Activated CD4-positive, alpha-beta T cell treated with anti-CD3 and anti-CD28 coated beads, Interleukin-2, amount 10 ng/mL, durations not matched to agents 24 days and 14 days (primary cell): ENCODE measurements at regions of chr9 and their contacts with region 1.

Region 1: DNA sequence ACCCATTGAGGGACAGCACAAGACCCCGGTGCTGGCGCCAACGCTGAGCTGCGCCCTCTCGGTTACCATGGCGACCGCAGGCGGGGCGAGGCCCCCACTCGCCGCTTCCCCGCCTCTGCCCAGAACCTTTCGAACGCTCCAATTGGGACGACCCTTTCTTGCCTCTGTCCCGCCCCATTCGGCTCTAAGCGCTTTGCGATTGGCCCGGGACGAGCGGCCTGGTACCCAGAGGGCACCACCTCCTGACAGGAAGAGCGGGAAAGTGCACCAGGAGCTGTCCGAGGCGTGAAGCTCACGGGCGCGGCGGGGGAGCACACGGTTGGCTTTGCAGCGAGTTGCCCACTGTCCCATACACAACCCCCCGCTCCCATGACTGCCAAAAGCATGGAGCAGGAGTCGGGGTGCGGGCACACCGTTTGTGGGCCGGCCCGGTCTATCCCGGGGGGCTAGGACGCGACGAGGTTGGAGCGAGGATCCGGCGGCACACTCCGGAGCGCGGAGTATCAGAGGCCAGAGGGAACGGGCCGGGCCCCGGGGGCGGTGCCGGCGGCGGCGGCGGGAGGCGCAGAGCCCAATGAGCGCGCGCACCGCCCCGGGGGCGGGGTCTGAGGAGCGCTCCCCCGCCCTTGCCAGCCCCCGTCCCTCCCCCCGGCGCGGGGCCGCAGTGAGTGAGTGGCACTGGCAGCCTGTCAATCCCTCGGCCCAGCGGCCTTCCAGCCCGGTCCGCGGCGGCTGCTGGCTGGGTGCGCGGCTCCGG is 978 bp upstream of the PBX3 start:
- DNase-seq: peak; percentile 97
- H3K4me3 Mint-ChIP-seq: peak overlapping the region; percentile 95
- H3K27ac Mint-ChIP-seq: peak overlapping the region; percentile 95
- H3K4me1 Mint-ChIP-seq: peaks cover 27% of the 10 kb centered on the region
- H3K27me3 Mint-ChIP-seq: peaks cover 39% of the 10 kb centered on the region

Region 2: DNA sequence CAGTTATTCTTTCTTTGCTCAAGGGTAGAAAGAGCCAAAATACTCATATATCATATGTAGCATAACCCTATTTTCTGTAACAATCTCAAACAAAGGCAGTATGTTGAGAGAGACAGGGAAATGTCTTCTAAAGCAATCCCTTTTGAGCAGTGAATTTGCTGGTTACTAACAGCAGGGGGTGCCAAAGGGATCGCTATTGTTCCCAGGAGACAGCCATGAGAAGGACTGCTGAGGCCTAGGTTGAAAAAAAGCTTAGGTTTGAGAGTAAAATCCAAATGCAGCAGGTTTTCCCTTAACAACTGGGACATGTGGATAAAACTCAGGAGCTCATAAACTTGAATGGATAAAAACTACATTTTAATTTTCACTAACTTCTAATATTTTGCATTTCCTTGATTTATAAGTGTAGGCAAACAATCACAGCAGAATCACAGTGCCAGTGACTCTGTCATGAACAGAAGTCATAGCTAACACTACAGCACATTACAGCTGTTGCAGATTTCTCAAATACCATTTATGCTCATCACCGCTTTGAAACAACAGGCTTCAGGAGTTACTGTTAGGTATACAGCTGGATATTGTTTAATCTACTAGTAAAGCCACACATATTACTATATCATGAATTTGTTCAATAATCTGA is 187.6 kb before region 1 on chr9:
- intact Hi-C with region 1: loop called (anchors 5 kb)
- DNase-seq: peak; percentile 86
- H3K4me3 Mint-ChIP-seq: no peak overlapping the region
- H3K27ac Mint-ChIP-seq: no peak overlapping the region
- H3K4me1 Mint-ChIP-seq: peaks cover 19% of the 10 kb centered on the region
- H3K27me3 Mint-ChIP-seq: no peaks in the 10 kb centered on the region

Region 3: DNA sequence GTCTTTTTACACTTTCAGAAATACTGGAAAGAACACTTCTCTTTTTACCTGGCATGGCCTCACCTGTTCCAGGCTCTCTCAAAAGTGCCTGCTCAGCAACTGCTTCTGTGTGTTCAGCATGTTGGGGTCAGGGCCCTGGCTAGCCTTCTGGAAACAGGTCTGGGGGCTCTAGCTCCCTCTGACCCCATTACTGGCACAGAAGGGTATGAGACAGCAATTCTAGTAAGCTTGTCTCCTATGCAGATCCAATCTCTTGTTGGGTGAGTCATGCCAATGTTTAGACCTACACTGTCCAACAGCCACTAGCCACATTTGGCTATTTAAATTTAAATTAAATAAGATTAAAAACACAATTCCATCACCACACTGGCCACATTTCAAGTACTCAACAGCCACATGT is 120.0 kb before region 1 on chr9:
- intact Hi-C with region 1: no loop called
- DNase-seq: peak; percentile 49
- H3K4me3 Mint-ChIP-seq: no peak overlapping the region
- H3K27ac Mint-ChIP-seq: no peak overlapping the region
- H3K4me1 Mint-ChIP-seq: peaks cover 14% of the 10 kb centered on the region
- H3K27me3 Mint-ChIP-seq: no peaks in the 10 kb centered on the region

Region 4: GRCh38 chr9:125650271-125650737 is 95.9 kb before region 1 on chr9:
- intact Hi-C with region 1: loop called (anchors 5 kb)
- DNase-seq: peak; percentile 61
- H3K4me3 Mint-ChIP-seq: peak overlapping the region; percentile 48
- H3K27ac Mint-ChIP-seq: peak overlapping the region; percentile 86
- H3K4me1 Mint-ChIP-seq: peaks cover 49% of the 10 kb centered on the region
- H3K27me3 Mint-ChIP-seq: no peaks in the 10 kb centered on the region

Region 5: DNA sequence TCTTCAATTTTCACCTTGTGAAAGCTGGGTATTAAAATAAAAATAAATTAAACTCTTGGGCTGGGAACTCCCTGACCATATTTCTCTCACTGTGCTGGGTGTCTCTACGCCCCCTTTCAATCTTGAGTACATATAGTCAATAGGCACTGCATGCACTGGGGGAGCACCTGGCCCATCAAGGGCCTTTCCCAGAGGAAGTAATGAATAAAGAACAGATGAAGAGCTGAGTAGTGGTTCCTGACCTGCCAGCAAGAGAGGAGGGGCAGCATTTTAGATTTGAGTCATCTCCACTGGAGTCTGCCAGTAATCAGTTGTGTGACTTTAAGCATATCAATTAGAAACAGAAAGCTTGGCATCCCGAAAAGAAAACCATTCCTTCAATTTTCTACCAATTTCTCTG is 45.4 kb before region 1 on chr9:
- intact Hi-C with region 1: loop called (anchors 1 kb)
- DNase-seq: peak; percentile 61
- H3K4me3 Mint-ChIP-seq: peak overlapping the region; percentile 29
- H3K27ac Mint-ChIP-seq: peak overlapping the region; percentile 61
- H3K4me1 Mint-ChIP-seq: peaks cover 37% of the 10 kb centered on the region
- H3K27me3 Mint-ChIP-seq: no peaks in the 10 kb centered on the region

Region 6: DNA sequence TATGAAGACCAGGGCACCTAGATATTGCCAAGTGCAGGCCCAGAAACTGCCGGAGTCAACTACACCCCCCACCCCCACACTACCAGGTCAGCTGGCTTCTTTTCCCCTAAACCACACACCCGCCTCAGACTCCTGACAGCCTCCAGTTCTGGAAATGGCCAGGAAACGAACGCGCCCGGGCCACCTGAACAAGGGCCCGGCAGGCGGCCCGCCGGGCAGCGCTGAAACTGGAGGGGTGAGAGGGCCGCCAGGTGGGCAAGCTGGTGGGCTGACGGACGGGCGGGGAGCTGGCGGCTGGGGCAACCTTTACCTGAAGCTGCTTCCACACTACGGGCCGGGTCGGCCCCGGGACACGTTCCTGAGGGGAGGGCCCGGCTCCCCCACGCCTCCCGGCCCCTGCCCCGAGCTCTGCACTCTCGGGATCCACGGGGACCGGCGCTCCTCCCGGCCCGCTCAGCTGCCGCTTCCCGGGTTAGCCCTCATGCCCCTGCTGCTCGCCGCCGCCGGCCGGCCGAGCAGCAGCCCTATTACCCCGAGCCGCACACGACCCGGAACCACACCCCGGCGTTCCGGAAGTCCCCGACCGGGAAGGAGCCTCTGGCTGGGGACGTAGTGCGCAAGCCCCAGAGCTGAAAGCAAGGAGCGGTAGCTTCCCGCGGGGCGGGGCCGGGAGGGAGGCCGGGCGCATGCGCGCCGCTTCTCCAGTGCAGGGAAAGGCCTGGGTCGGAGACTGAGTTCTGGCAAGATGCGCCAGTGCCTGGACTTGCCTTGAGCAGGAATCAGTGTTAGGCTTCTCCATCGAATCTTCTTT is 39.3 kb before region 1 on chr9 and contains the start of gene MAPKAP1:
- intact Hi-C with region 1: loop called (anchors 1 kb)
- DNase-seq: peak; percentile 98
- H3K4me3 Mint-ChIP-seq: peak within 1 kb of the TSS; percentile 89
- H3K27ac Mint-ChIP-seq: peak within 1 kb of the TSS; percentile 83
- H3K4me1 Mint-ChIP-seq: peaks cover 35% of the 10 kb centered on the region
- H3K27me3 Mint-ChIP-seq: peaks cover 2% of the 10 kb centered on the region
- total RNA-seq, gene MAPKAP1: 104 and 123 TPM in 2 replicates